ENCODE measurements at regions of chr16 and their contacts with region 1.

Region 1: GRCh38 chr16:3383045-3383448 is 17.8 kb downstream of the ZSCAN32 start:
- DNase-seq: no peak
- H3K4me3 ChIP-seq: no peak overlapping the region
- H3K27ac ChIP-seq: no peak overlapping the region
- H3K4me1 ChIP-seq: no peaks in the 10 kb centered on the region
- H3K27me3 ChIP-seq: no peaks in the 10 kb centered on the region
- CTCF ChIP-seq: no peak
- POLR2A ChIP-seq: no peak

Region 2: GRCh38 chr16:3223913-3224515 is 159.0 kb before region 1 on chr16:
- intact Hi-C with region 1: loop called (anchors 5 kb)
- DNase-seq: no peak
- H3K4me3 ChIP-seq: no peak overlapping the region
- H3K27ac ChIP-seq: no peak overlapping the region
- H3K4me1 ChIP-seq: no peaks in the 10 kb centered on the region
- H3K27me3 ChIP-seq: no peaks in the 10 kb centered on the region
- CTCF ChIP-seq: no peak
- POLR2A ChIP-seq: no peak

Region 3: DNA sequence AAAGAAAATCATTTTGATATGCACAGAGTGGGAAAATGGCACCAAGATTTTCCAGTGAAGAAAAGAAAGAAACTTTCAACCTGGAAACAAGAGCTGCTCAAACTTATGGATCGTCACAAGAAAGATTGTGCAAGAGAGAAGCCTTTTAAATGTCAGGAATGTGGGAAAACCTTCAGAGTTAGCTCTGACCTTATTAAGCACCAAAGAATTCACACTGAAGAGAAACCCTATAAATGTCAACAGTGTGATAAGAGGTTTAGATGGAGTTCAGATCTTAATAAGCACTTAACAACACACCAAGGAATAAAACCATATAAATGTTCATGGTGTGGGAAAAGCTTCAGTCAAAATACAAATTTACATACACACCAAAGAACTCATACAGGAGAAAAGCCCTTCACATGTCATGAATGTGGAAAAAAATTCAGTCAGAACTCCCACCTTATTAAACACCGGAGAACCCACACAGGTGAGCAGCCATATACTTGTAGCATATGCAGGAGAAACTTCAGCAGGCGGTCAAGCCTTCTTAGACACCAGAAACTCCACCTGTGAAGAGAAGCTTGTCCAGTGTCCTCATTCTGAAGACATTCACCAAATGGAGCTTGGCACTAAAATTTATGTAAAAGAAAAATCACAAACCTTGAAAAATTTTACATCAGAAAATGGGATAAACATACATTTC is 65.6 kb before region 1 on chr16:
- intact Hi-C with region 1: loop called (anchors 5 kb)
- DNase-seq: no peak
- H3K4me3 ChIP-seq: no peak overlapping the region
- H3K27ac ChIP-seq: no peak overlapping the region
- H3K4me1 ChIP-seq: no peaks in the 10 kb centered on the region
- H3K27me3 ChIP-seq: no peaks in the 10 kb centered on the region
- CTCF ChIP-seq: no peak
- POLR2A ChIP-seq: no peak